Dendritic cell treated with granulocyte-macrophage colony-stimulating factor and Interleukin-4, amounts not matched to agents 40 ng/mL and 50 ng/mL, for 4 days (primary cell): ENCODE measurements at regions of chr3 and their contacts with region 1.

Region 1: GRCh38 chr3:16290007-16290826 is 25.2 kb downstream of the OXNAD1 start:
- H3K4me3 Mint-ChIP-seq: no peak overlapping the region
- H3K27ac Mint-ChIP-seq: peak overlapping the region; percentile 52
- H3K4me1 Mint-ChIP-seq: peaks cover 22% of the 10 kb centered on the region
- H3K27me3 Mint-ChIP-seq: no peaks in the 10 kb centered on the region

Region 2: GRCh38 chr3:16012086-16012485 is 278.1 kb before region 1 on chr3:
- intact Hi-C with region 1: no loop called
- H3K4me3 Mint-ChIP-seq: no peak overlapping the region
- H3K27ac Mint-ChIP-seq: no peak overlapping the region
- H3K4me1 Mint-ChIP-seq: no peaks in the 10 kb centered on the region
- H3K27me3 Mint-ChIP-seq: no peaks in the 10 kb centered on the region

Region 3: DNA sequence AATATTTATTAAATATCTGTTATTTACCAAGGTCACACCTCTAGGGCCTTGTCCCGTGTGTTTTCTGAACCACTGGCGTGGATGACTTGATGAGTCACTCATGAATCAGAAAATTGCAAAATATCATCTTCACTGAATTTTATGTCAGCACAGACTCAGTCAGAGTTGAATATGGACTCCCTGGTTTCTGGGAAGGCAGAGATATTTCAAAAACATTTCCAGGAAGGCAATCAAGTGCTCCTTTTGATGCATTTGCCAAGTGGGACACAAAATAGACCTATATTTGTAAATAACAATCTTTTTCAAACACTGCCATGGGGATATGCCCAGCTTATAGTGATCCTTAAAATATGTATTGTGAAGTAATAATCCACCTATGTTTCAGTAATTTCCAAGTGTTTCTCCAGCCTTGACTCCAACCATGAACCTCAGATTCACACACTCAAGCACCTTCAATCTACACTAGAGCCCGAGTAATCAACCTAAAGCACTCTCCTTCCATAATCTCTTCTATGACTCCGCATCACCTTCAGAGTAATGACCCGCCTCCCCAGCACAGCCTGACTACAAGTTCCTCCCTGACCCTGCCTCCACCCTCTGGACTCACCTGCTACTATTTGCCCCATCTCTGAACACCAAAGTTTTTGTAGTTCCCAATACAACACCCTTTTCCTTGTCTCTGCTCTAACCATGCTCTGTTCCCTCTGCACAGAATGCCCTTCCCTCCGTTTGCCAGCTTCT is 49.8 kb before region 1 on chr3:
- intact Hi-C with region 1: no loop called
- H3K4me3 Mint-ChIP-seq: no peak overlapping the region
- H3K27ac Mint-ChIP-seq: peak overlapping the region; percentile 4
- H3K4me1 Mint-ChIP-seq: peaks cover 17% of the 10 kb centered on the region
- H3K27me3 Mint-ChIP-seq: no peaks in the 10 kb centered on the region

Region 4: GRCh38 chr3:16332904-16333426 is 42.7 kb after region 1 on chr3:
- intact Hi-C with region 1: no loop called
- H3K4me3 Mint-ChIP-seq: no peak overlapping the region
- H3K27ac Mint-ChIP-seq: no peak overlapping the region
- H3K4me1 Mint-ChIP-seq: peaks cover 4% of the 10 kb centered on the region
- H3K27me3 Mint-ChIP-seq: no peaks in the 10 kb centered on the region

Region 5: DNA sequence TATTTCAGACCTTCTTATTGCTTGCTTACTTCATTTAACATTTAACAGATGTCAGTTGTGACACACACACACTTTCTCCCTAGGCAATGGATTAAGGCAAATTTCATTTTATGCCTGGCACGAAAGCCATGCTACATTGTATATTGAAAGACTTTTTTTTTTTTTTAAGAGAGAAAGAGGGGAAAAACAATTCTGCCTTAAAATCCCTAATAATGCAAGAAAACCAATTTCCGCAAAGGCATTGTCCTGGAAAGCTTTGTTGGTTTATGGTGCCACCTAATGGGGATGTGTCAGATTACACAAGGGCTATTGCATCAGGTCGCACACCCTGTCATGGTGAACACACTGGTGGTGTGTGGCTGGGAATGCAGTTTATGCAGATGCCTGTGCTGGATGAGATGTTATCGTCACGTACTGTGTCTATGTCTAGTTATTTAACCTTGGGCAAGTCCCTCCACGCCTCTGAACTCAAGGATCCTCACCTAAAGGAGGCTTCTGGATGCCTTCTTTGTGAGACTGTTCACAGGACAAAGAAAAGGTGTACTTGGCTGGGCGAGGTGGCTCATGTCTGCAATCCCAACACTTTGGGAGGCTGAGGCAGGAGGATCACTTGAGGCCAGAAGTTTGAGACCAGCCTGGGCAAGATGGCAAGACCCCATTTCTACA is 260.6 kb after region 1 on chr3:
- intact Hi-C with region 1: loop called (anchors 1 kb)
- H3K4me3 Mint-ChIP-seq: no peak overlapping the region
- H3K27ac Mint-ChIP-seq: no peak overlapping the region
- H3K4me1 Mint-ChIP-seq: peaks cover 5% of the 10 kb centered on the region
- H3K27me3 Mint-ChIP-seq: peaks cover 1% of the 10 kb centered on the region

Region 6: DNA sequence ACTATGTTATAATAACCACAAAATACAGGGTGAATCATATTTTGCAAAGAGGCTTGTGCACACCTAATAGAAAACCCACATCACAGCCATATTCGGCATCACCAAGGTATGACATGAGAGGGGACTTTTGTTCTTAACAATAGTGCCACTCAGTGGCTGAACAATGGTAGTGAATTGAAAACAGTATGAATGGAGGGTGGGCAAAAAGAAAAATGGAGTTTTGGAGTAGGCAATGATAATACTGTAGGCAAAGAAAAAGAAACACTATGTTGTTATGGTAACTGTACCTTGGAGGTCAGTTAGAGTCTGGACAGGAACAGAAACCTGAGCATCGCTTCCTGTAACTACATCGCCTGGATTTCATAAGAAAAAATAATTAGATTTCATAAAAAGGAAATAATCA is 943.2 kb after region 1 on chr3:
- intact Hi-C with region 1: loop called (anchors 10 kb)
- H3K4me3 Mint-ChIP-seq: no peak overlapping the region
- H3K27ac Mint-ChIP-seq: no peak overlapping the region
- H3K4me1 Mint-ChIP-seq: peaks cover 5% of the 10 kb centered on the region
- H3K27me3 Mint-ChIP-seq: no peaks in the 10 kb centered on the region